AG04449 (cell line): ENCODE measurements at regions of chr13 and their contacts with region 1.

Region 1: DNA sequence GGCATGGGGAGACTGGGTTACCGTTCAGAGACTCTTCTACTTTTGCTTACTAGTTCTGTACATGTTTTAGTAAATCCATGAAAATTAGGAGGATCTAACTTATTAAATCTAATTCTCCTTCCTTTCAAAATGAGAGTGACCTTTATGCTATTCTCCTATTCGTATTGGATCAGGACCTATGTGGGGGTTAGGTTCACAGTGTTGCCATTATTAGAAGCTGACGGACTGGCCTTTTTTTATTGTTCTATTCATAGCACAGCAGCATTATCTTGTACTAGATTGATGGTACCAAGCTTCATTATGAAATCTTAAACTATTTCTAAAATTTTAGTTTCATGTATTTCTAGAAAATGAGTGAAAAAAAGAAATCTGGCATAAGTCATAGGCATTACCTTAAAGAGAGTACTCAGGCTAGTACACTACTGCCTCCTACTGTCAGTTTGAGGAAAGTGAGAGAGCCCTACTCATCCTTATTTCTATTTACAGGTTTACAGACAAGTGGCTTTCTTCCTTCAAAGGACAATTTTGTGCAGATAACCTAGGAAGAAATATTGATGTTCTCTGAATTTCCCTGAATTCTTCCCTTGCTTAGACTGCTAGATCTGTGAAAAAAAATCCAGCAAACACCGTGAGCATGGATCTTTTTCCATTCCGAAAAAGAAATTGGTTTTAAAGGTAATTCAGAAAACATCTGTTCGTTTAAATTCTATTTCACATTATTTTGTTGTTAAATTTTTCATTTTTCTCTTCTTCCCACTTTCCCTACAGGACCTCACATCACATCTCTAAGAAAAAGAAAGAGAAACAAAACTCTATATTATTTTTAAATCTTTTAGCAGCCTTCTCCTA is 485.5 kb downstream of the DIAPH3 start:
- DNase-seq: peak; percentile 19
- H3K4me3 ChIP-seq: no peak overlapping the region
- CTCF ChIP-seq: peak; percentile 76

Region 2: GRCh38 chr13:59391696-59392095 is 286.5 kb before region 1 on chr13:
- CTCF ChIA-PET with region 1: interaction called, 242 read pairs
- POLR2A ChIA-PET with region 1: no interaction called
- DNase-seq: no peak
- H3K4me3 ChIP-seq: no peak overlapping the region
- CTCF ChIP-seq: peak; percentile 84

Region 3: DNA sequence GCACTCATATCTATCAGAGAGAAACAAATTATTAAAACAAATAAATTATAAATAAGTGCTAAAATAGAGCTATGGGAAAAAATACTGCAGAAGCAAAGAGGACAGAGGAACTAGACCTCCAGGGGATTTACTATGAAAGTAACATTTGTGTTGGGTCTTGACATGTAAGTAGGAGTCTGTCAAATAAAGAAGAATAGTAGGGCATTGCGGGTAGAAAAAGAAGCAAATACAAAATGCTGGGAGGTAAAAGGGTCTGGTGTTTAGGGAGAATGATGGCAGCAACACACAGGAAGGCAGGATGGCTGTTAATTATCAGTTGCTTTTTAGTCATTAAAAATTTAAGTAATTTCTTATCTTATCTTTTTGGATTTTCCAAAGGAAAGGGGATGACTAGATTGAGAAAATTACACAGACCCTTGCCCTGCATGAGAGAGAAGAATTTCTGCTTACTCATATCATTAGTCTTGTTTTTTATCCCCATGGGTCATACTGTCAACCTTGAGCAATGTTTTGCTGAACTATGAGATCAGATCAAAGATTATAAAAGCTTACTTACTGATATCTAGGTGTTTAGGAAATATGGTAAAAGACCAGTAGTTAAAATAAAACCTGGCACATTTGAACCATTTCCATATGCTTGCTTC is 12.8 kb after region 1 on chr13:
- CTCF ChIA-PET with region 1: interaction called, 28 read pairs
- POLR2A ChIA-PET with region 1: no interaction called
- DNase-seq: no peak
- H3K4me3 ChIP-seq: no peak overlapping the region
- CTCF ChIP-seq: no peak

Region 4: GRCh38 chr13:59771272-59771671 is 93.1 kb after region 1 on chr13:
- CTCF ChIA-PET with region 1: interaction called, 125 read pairs
- POLR2A ChIA-PET with region 1: no interaction called
- DNase-seq: no peak
- H3K4me3 ChIP-seq: no peak overlapping the region
- CTCF ChIP-seq: peak; percentile 61

Region 5: DNA sequence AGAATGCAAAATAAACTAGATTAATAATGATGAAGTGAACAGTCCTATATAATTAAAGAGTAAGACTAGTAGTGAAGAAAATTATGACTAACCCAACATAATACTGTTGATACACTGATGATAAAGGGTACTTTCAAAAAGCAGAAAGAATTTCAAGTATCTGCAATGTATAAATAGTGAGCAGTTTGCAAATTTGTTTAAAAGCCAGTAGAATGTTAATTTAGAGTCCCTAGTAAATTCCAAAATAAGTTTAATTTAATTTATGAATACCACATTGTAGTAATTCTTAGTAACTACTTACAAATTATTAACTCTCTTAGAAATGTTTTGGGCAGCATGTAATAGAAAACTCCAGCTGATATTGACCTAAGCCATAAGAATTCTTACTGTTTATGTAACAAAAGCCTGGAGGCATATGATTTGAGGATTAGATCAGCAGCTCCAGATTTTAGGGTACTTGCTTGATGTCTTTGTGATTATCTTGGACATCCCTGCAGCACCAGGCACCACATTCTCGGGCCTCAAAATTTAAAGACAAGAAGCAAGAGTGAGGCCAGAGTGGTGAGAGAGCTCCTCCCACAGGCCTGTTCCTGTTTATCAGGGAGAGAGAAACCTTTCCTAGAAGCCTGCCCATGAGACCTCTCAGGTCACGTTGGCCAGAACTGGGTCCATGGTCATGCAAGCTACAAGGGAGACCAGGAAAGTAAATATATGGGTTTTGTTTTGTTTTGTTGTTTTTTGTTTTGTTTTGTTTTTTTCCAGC is 651.2 kb after region 1 on chr13:
- CTCF ChIA-PET with region 1: interaction called, 16 read pairs
- POLR2A ChIA-PET with region 1: no interaction called
- DNase-seq: no peak
- H3K4me3 ChIP-seq: no peak overlapping the region
- CTCF ChIP-seq: peak; percentile 36